ENCODE measurements at regions of chr10 and their contacts with region 1.

Region 1: GRCh38 chr10:219731-220472 is 84.6 kb downstream of the ZMYND11 start:
- DNase-seq: no peak
- H3K4me3 Mint-ChIP-seq: no peak overlapping the region
- H3K27ac Mint-ChIP-seq: no peak overlapping the region
- H3K4me1 Mint-ChIP-seq: peaks cover 21% of the 10 kb centered on the region
- H3K27me3 Mint-ChIP-seq: no peaks in the 10 kb centered on the region

Region 2: GRCh38 chr10:230737-231136 is 10.8 kb after region 1 on chr10:
- CTCF ChIA-PET with region 1: interaction called, 11 read pairs
- POLR2A ChIA-PET with region 1: no interaction called
- DNase-seq: no peak
- H3K4me3 Mint-ChIP-seq: no peak overlapping the region
- H3K27ac Mint-ChIP-seq: no peak overlapping the region
- H3K4me1 Mint-ChIP-seq: peaks cover 7% of the 10 kb centered on the region
- H3K27me3 Mint-ChIP-seq: no peaks in the 10 kb centered on the region

Measured in activated CD4-positive, alpha-beta memory T cell treated with anti-CD3 and anti-CD28 coated beads, Interleukin-2, amount 10 ng/mL, durations not matched to agents 7 days and 5 days (primary cell).